Activated CD8-positive, alpha-beta memory T cell treated with anti-CD3 and anti-CD28 coated beads, Interleukin-2, amount 10 ng/mL, durations not matched to agents 7 days and 5 days (primary cell): ENCODE measurements at regions of chr18 and their contacts with region 1.

Region 1: GRCh38 chr18:43587538-43588153 is 310.4 kb upstream of the SYT4 start:
- DNase-seq: no peak
- ATAC-seq: no peak
- H3K4me3 Mint-ChIP-seq: no peak overlapping the region
- H3K27ac Mint-ChIP-seq: no peak overlapping the region
- H3K4me1 Mint-ChIP-seq: no peaks in the 10 kb centered on the region
- H3K27me3 Mint-ChIP-seq: no peaks in the 10 kb centered on the region

Region 2: GRCh38 chr18:43571078-43571689 is 16.5 kb before region 1 on chr18:
- CTCF ChIA-PET with region 1: interaction called, 20 read pairs
- DNase-seq: no peak
- ATAC-seq: no peak
- H3K4me3 Mint-ChIP-seq: no peak overlapping the region
- H3K27ac Mint-ChIP-seq: no peak overlapping the region
- H3K4me1 Mint-ChIP-seq: no peaks in the 10 kb centered on the region
- H3K27me3 Mint-ChIP-seq: peaks cover 3% of the 10 kb centered on the region

Region 3: GRCh38 chr18:43648002-43648401 is 60.4 kb after region 1 on chr18:
- CTCF ChIA-PET with region 1: no interaction called
- DNase-seq: no peak
- ATAC-seq: no peak
- H3K4me3 Mint-ChIP-seq: no peak overlapping the region
- H3K27ac Mint-ChIP-seq: no peak overlapping the region
- H3K4me1 Mint-ChIP-seq: no peaks in the 10 kb centered on the region
- H3K27me3 Mint-ChIP-seq: no peaks in the 10 kb centered on the region

Region 4: GRCh38 chr18:43661570-43661969 is 73.9 kb after region 1 on chr18:
- CTCF ChIA-PET with region 1: no interaction called
- DNase-seq: no peak
- ATAC-seq: no peak
- H3K4me3 Mint-ChIP-seq: no peak overlapping the region
- H3K27ac Mint-ChIP-seq: no peak overlapping the region
- H3K4me1 Mint-ChIP-seq: no peaks in the 10 kb centered on the region
- H3K27me3 Mint-ChIP-seq: no peaks in the 10 kb centered on the region